ENCODE measurements at regions of chr12 and their contacts with region 1.

Region 1: DNA sequence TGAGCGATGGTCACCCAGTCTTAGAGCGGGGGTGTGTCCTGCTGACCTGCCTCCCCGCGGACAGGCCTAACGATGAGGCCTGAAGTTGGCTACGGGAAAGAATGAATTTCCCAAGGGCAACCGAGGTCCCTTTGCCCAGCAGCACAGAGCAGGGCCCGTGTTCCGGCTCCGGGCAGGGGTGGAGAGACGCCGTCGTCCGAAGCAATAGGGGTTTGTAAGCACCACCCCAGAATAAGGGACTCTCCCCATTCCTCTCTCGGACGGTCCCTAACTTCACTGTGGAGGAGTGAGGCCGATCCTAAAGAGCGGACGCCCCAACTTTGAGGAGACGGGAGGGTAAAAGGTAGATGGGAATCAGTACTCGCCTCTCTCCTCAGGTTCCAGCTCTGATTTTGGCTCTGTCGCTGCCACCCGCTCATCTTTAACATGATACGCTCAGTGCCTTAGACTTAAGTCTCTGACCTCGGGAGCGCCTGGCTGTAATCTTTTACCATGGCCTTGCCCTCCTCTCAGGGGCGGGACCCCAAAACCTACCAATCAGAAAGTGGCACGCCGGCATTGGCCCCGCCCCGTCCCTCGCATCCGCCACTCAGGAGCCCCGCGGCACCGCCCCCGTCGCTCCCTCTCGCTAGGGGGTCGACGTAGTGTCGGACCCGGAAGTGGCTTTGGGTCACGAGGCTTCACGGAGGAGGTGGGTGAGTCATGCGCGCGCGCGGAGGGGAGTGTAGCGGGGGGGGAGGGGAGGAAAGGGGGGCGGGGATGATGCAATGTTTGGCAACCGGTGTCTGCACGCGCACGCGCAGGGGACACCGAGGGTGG is at the start of gene DDIT3:
- DNase-seq: peak; percentile 100
- ATAC-seq: peak; percentile 75
- H3K4me3 ChIP-seq: peak within 1 kb of the TSS; percentile 97 to 100 (median 98)
- H3K4me3 Mint-ChIP-seq: peak within 1 kb of the TSS; percentile 99
- H3K27ac ChIP-seq: peak within 1 kb of the TSS; percentile 98 to 100
- H3K27ac Mint-ChIP-seq: peak within 1 kb of the TSS; percentile 100
- H3K4me1 ChIP-seq: peaks cover 42 to 53% of the 10 kb centered on the region in 2 donors
- H3K4me1 Mint-ChIP-seq: peaks cover 57% of the 10 kb centered on the region
- H3K27me3 ChIP-seq: no peaks in the 10 kb centered on the region
- H3K27me3 Mint-ChIP-seq: no peaks in the 10 kb centered on the region
- CTCF ChIP-seq: no peak
- total RNA-seq, gene DDIT3: 35.6 and 39.5 TPM in 2 replicates

Region 2: DNA sequence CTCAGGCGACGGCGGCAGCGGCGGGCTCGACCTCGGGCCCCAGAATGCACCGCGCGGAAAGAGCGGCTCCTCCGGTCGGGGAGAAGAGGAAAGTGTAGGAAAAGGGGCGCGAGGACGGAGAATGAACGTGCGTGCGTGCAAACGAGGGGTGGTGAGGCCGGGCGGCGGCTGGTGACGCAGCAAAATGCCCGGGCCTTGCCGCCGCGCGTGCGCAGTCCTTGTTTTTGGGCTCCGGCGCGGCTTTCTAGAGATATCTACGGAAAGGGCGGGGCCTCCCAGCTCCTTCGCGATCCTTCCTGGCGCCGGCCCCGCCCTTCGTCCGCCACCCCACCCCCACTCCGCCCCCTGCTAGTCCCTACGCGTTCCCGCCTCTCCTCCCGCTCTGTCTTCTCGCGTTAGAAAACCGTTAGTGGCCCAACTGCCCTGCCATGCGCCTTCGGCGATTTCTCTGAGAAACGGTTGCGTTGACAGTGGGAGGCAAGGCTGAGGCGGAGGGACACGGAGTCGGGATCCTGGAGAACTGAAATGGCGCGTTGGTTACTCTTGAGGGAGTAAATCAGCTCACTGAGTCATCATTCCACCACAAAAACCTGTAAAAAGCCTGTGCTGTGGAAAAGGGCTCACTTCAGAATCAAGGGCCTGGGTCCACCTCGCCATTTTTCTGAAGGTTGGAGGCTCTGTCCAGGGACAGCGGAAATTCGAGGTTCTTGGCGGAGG is 832.0 kb before region 1 on chr12 and contains the start of gene PTGES3:
- CTCF ChIA-PET with region 1: no interaction called
- POLR2A ChIA-PET with region 1: no interaction called
- intact Hi-C with region 1: loop called (anchors 2 kb)
- DNase-seq: peak; percentile 99
- ATAC-seq: peak; percentile 80
- H3K4me3 ChIP-seq: peak within 1 kb of the TSS; percentile 72 to 99 (median 92)
- H3K4me3 Mint-ChIP-seq: peak within 1 kb of the TSS; percentile 97
- H3K27ac ChIP-seq: peak within 1 kb of the TSS; percentile 95
- H3K27ac Mint-ChIP-seq: peak within 1 kb of the TSS; percentile 98
- H3K4me1 ChIP-seq: peaks cover 29 to 44% of the 10 kb centered on the region in 2 donors
- H3K4me1 Mint-ChIP-seq: peaks cover 35% of the 10 kb centered on the region
- H3K27me3 ChIP-seq: no peaks in the 10 kb centered on the region
- H3K27me3 Mint-ChIP-seq: no peaks in the 10 kb centered on the region
- CTCF ChIP-seq: no peak
- total RNA-seq, gene PTGES3: 121 and 124 TPM in 2 replicates

Region 3: DNA sequence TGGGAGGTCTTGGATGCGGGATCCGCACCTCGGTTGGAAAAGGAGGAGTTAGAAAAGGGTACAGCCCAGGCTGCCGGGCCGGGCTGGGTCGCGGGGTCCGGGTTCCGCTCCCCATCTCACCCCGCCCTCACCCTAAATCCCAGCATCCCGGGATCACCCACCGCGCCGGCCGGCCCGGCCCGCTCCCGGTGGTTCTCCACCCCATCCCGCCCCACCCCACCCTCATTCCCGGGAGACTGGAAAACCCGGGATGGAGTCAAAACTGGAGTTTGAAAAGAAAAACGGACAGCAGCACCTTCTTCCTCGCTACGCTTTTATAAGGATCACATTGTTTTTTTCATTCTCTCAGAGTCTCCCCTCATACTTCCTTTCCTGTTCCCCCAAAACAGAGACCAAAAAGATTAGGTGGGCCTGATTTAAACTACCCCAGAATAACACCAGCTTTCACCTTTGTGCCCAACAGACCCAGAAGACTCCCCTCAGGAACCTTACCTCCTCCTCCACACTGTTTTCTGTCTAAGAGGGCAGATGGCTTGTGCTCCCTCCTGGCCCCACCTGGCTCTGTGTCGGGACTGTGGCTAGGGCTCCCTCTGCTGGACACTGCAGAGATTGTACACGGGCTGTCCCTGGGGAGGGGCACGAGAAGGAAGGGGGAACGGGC is 57.9 kb before region 1 on chr12:
- CTCF ChIA-PET with region 1: interaction called, 7 read pairs
- POLR2A ChIA-PET with region 1: interaction called, 4 read pairs
- intact Hi-C with region 1: loop called (anchors 1 kb)
- DNase-seq: peak; percentile 96
- ATAC-seq: peak; percentile 64
- H3K4me3 ChIP-seq: peak overlapping the region; percentile 58 to 93 (median 81)
- H3K4me3 Mint-ChIP-seq: peak overlapping the region; percentile 92
- H3K27ac ChIP-seq: peak overlapping the region; percentile 15 to 58
- H3K27ac Mint-ChIP-seq: peak overlapping the region; percentile 93
- H3K4me1 ChIP-seq: peaks cover 23 to 48% of the 10 kb centered on the region in 2 donors
- H3K4me1 Mint-ChIP-seq: peaks cover 40% of the 10 kb centered on the region
- H3K27me3 ChIP-seq: no peaks in the 10 kb centered on the region
- H3K27me3 Mint-ChIP-seq: no peaks in the 10 kb centered on the region
- CTCF ChIP-seq: peak; percentile 88

Region 4: DNA sequence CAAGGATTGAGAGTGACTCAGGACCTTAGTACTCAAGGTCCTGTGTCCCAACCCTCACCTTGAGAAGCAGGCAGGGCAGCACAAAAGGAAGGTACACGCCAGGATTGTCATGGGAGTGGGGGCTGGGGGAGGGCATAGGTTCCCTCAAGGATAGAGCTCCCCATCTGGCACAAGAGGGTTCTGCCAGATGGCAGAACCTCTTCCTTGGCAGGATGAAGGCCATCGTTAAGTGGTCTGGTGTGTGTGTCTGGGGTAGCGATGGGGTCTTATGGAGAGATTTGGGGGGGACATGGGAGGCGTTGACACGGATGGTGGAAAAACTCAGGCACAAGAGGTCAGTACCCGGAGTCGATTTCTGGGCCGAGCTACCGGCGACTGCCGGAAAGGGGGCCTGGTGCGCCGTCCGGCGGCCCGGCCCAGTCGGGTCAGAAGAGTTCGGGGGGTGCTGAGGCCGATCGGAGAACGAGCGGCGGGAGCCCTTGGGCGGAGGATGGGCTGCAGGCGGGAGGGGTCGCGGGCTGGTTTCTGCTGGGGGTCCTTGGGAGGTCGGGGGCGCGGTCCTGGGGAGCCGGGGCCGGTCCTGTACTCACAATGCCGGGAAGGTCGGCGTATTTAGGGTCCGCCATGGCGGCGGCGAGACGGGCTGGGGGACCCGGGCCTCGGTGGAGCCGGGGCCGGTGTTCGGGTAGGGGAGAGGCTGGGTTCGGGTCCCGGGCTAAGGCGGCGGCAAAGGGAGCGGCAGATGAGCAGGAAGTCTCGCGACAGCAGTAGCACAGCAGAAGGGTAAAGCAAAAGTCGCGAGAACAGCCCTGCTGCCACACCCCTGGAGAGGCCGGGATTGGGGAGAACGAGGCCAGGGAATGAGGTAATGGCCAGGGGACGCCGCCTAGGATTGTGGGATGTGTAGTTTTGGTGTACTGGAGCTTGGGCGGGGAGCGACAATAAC is 26.4 kb after region 1 on chr12 and contains the start of gene DCTN2:
- CTCF ChIA-PET with region 1: interaction called, 3 read pairs
- POLR2A ChIA-PET with region 1: interaction called, 13 read pairs
- intact Hi-C with region 1: loop called (anchors 1 kb)
- DNase-seq: peak; percentile 94
- ATAC-seq: peak; percentile 97
- H3K4me3 ChIP-seq: peak within 1 kb of the TSS; percentile 68 to 96 (median 85)
- H3K4me3 Mint-ChIP-seq: peak within 1 kb of the TSS; percentile 99
- H3K27ac ChIP-seq: peak within 1 kb of the TSS; percentile 58 to 90
- H3K27ac Mint-ChIP-seq: peak within 1 kb of the TSS; percentile 87
- H3K4me1 ChIP-seq: peaks cover 21 to 27% of the 10 kb centered on the region in 2 donors
- H3K4me1 Mint-ChIP-seq: peaks cover 51% of the 10 kb centered on the region
- H3K27me3 ChIP-seq: peaks cover 0 to 26% (median 10%) of the 10 kb centered on the region in 4 experiments
- H3K27me3 Mint-ChIP-seq: peaks cover 18% of the 10 kb centered on the region
- CTCF ChIP-seq: no peak
- total RNA-seq, gene DCTN2: 94.3 and 97.6 TPM in 2 replicates

Region 5: DNA sequence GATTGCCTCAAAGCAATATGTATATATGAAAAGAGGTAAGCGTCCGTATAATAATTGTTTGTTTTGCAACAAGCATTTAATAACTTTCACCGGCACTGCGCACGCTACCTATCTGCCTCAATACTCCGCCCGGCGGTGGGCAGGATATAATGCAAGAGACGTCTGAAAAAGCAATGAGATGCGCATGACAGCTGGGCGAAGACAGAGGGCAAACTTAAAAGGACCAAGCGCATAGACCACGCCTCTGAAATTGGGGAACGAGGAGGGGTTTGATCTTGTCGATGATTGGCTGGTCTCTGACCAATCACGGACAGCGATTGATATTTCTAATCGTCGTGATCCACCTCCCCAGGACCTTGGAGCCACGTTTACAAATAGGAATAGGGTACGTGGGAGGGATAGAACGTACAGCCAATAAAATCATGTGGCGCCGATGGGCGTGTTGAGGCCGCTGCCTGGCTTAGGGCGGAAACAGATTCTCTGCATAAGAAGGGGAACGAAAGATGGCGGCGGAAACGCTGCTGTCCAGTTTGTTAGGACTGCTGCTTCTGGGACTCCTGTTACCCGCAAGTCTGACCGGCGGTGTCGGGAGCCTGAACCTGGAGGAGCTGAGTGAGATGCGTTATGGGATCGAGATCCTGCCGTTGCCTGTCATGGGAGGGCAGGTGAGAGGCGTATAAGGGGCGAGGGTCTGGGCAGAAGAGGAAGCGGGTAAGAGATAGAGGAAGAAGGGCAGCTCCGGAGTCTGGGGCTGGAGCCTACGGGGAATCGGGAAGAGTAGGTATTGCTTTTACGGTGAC is 173.6 kb after region 1 on chr12 and contains the start of gene OS9:
- CTCF ChIA-PET with region 1: interaction called, 3 read pairs
- POLR2A ChIA-PET with region 1: no interaction called
- intact Hi-C with region 1: loop called (anchors 2 kb)
- DNase-seq: peak; percentile 99
- ATAC-seq: peak; percentile 92
- H3K4me3 ChIP-seq: peak within 1 kb of the TSS; percentile 80 to 93 (median 89)
- H3K4me3 Mint-ChIP-seq: no peak within 1 kb of the TSS
- H3K27ac ChIP-seq: peak within 1 kb of the TSS; percentile 62 to 78
- H3K27ac Mint-ChIP-seq: no peak within 1 kb of the TSS
- H3K4me1 ChIP-seq: peaks cover 13 to 17% of the 10 kb centered on the region in 2 donors
- H3K4me1 Mint-ChIP-seq: peaks cover 13% of the 10 kb centered on the region
- H3K27me3 ChIP-seq: no peaks in the 10 kb centered on the region
- H3K27me3 Mint-ChIP-seq: peaks cover 13% of the 10 kb centered on the region
- CTCF ChIP-seq: peak; percentile 82
- total RNA-seq, gene OS9: 182 and 200 TPM in 2 replicates

Measured in B cell (primary cell).